ENCODE measurements at regions of chr12 and their contacts with region 1.

Region 1: GRCh38 chr12:4857472-4858291 is 52.0 kb upstream of the KCNA1 start:
- DNase-seq: peak; percentile 49 to 67
- H3K4me3 ChIP-seq: peak overlapping the region in 2 of 3 donors; percentile 27 to 45
- H3K27ac ChIP-seq: no peak overlapping the region
- H3K4me1 ChIP-seq: peaks cover 0 to 7% of the 10 kb centered on the region in 2 donors
- H3K27me3 ChIP-seq: peaks cover 0 to 2% of the 10 kb centered on the region in 2 donors
- CTCF ChIP-seq: peak; percentile 46 to 79 (median 71)
- POLR2A ChIP-seq: no peak

Region 2: DNA sequence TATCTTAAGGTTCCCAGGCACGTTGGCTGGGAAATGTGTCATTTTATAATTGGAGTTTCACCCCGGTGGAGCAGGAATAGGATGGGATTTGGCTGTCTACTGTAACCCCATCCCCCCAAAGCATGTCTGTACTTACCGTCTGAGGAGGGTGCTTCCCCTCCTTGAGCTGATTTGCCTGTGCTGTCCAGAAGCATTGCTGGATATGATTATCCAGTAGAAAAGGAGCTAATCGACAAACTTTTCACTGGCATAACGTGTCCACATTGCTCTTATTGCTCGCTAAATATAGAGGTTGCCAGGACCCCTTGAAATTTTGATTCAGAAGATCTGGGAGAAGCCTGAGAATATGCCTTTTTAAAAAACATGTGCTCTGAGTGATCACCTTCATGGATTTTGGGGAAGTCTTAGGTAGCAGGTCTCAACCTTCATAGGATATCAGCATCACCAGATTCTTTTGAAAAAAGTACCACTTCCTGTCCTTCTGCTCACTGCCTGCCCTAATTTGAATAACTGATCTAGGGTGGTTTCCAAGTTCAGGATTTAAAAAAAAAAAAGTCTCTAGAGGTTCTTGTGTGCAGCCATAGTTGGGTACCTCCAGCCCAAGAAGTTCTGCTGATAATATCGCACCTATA is 28.4 kb before region 1 on chr12:
- intact Hi-C with region 1: loop called (anchors 1 kb)
- DNase-seq: no peak
- H3K4me3 ChIP-seq: no peak overlapping the region
- H3K27ac ChIP-seq: no peak overlapping the region
- H3K4me1 ChIP-seq: no peaks in the 10 kb centered on the region
- H3K27me3 ChIP-seq: peaks cover 0 to 10% of the 10 kb centered on the region in 2 donors
- CTCF ChIP-seq: no peak
- POLR2A ChIP-seq: no peak

Region 3: GRCh38 chr12:4908684-4909409 is 51.2 kb after region 1 on chr12:
- intact Hi-C with region 1: no loop called
- DNase-seq: no peak
- H3K4me3 ChIP-seq: peak overlapping the region; percentile 46 to 80 (median 60)
- H3K27ac ChIP-seq: no peak overlapping the region
- H3K4me1 ChIP-seq: peaks cover 4% of the 10 kb centered on the region in 2 donors
- H3K27me3 ChIP-seq: peaks cover 0 to 53% of the 10 kb centered on the region in 2 donors
- CTCF ChIP-seq: no peak
- POLR2A ChIP-seq: no peak

Region 4: DNA sequence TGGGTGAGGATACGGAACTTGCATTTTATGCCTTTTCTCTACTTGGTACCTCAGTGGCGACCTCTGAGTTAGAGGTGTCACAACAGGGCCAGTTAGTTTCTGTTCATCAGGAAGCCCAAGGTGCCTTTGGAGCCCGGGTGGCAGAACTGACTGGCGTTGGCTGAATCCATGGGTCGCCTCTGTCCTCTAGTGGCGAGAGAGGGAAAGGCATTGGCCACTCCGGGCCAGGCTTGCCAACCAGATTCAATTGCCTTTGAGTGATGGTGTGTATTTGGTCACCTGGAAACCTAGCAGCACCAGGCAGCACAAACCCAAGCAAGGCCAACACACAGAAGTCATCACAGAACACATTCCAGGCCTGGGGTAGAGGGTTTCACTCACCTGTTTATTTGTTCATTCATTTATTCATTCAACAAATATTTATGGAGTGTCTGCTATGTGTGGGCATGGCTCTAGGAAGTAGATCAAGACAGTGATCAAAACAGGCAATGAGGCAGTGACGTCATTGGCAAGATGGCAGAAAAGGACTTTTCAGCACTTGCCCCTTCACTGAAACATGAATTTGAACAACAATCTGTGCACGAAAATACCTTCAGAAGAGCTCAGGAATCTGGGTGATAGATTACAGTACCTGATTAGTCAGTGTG is 145.5 kb after region 1 on chr12:
- intact Hi-C with region 1: loop called (anchors 10 kb)
- DNase-seq: peak; percentile 26 to 70
- H3K4me3 ChIP-seq: no peak overlapping the region
- H3K27ac ChIP-seq: no peak overlapping the region
- H3K4me1 ChIP-seq: no peaks in the 10 kb centered on the region
- H3K27me3 ChIP-seq: peaks cover 3% of the 10 kb centered on the region in 2 donors
- CTCF ChIP-seq: peak; percentile 47 to 89 (median 89)
- POLR2A ChIP-seq: no peak

Region 5: GRCh38 chr12:5083955-5084849 is 226.5 kb after region 1 on chr12:
- intact Hi-C with region 1: loop called (anchors 10 kb)
- DNase-seq: no peak
- H3K4me3 ChIP-seq: no peak overlapping the region
- H3K27ac ChIP-seq: no peak overlapping the region
- H3K4me1 ChIP-seq: no peaks in the 10 kb centered on the region
- H3K27me3 ChIP-seq: peaks cover 0 to 6% of the 10 kb centered on the region in 2 donors
- CTCF ChIP-seq: peak in 2 of 3 donors; percentile 59 to 63
- POLR2A ChIP-seq: no peak